T-cell (primary cell): ENCODE measurements at regions of chr7 and their contacts with region 1.

Region 1: GRCh38 chr7:55288070-55288824 is 76.9 kb upstream of the LANCL2 start:
- DNase-seq: no peak
- ATAC-seq: no peak
- H3K4me3 ChIP-seq: no peak overlapping the region
- H3K4me3 Mint-ChIP-seq: no peak overlapping the region
- H3K27ac ChIP-seq: no peak overlapping the region
- H3K27ac Mint-ChIP-seq: no peak overlapping the region
- H3K4me1 ChIP-seq: no peaks in the 10 kb centered on the region
- H3K4me1 Mint-ChIP-seq: peaks cover 0 to 1% (median 0%) of the 10 kb centered on the region in 3 donors
- H3K27me3 ChIP-seq: peaks cover 0 to 3% of the 10 kb centered on the region in 2 experiments
- H3K27me3 Mint-ChIP-seq: peaks cover 0 to 10% of the 10 kb centered on the region in 2 donors

Region 2: GRCh38 chr7:54985405-54986330 is 302.6 kb before region 1 on chr7:
- CTCF ChIA-PET with region 1: no interaction called
- POLR2A ChIA-PET with region 1: no interaction called
- DNase-seq: no peak
- ATAC-seq: no peak
- H3K4me3 ChIP-seq: no peak overlapping the region
- H3K4me3 Mint-ChIP-seq: no peak overlapping the region
- H3K27ac ChIP-seq: no peak overlapping the region
- H3K27ac Mint-ChIP-seq: no peak overlapping the region
- H3K4me1 ChIP-seq: no peaks in the 10 kb centered on the region
- H3K4me1 Mint-ChIP-seq: no peaks in the 10 kb centered on the region
- H3K27me3 ChIP-seq: peaks cover 0 to 6% of the 10 kb centered on the region in 2 experiments
- H3K27me3 Mint-ChIP-seq: peaks cover 4 to 22% of the 10 kb centered on the region in 2 donors

Region 3: DNA sequence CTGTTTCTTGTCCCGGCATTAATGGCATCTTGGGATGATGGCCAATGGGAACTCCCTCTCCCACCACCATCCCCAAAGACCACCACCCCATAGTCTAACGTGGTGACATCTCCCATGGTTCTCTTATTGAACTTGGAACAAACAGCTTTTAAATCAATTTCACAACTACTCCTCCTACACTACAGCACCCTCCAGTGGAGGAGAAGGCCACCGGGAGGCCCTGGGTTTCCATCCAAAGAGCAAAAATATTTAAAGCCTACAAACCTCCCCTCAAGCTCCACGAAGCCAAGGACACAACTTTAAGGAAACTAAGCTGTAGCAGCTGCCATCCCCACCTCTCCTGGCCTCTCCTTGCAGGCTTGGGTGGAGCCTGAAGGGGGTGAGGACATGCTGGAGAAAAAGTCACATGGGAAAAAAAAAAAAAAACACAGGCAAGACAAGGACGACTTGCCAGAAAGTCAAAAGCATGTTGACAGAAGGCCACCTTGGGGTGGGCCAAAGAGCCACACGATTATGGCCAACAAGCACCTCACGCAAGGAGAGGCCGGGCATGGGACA is 17.1 kb before region 1 on chr7:
- CTCF ChIA-PET with region 1: no interaction called
- POLR2A ChIA-PET with region 1: no interaction called
- DNase-seq: no peak
- ATAC-seq: no peak
- H3K4me3 ChIP-seq: no peak overlapping the region
- H3K4me3 Mint-ChIP-seq: no peak overlapping the region
- H3K27ac ChIP-seq: no peak overlapping the region
- H3K27ac Mint-ChIP-seq: no peak overlapping the region
- H3K4me1 ChIP-seq: no peaks in the 10 kb centered on the region
- H3K4me1 Mint-ChIP-seq: no peaks in the 10 kb centered on the region
- H3K27me3 ChIP-seq: peaks cover 0 to 29% of the 10 kb centered on the region in 2 experiments
- H3K27me3 Mint-ChIP-seq: peaks cover 0 to 6% of the 10 kb centered on the region in 2 donors

Region 4: GRCh38 chr7:55509322-55509721 is 221.1 kb after region 1 on chr7:
- CTCF ChIA-PET with region 1: interaction called in 1 of 2 experiments, 16 read pairs
- POLR2A ChIA-PET with region 1: no interaction called
- DNase-seq: no peak
- ATAC-seq: no peak
- H3K4me3 ChIP-seq: no peak overlapping the region
- H3K4me3 Mint-ChIP-seq: no peak overlapping the region
- H3K27ac ChIP-seq: no peak overlapping the region
- H3K27ac Mint-ChIP-seq: peak overlapping the region; percentile 49 to 56
- H3K4me1 ChIP-seq: peaks cover 0 to 6% of the 10 kb centered on the region in 2 experiments
- H3K4me1 Mint-ChIP-seq: peaks cover 39 to 67% (median 47%) of the 10 kb centered on the region in 3 donors
- H3K27me3 ChIP-seq: no peaks in the 10 kb centered on the region
- H3K27me3 Mint-ChIP-seq: no peaks in the 10 kb centered on the region